ENCODE measurements at regions of chr17 and their contacts with region 1.

Region 1: GRCh38 chr17:48127356-48128051 is 19.9 kb downstream of the SNX11 start:
- DNase-seq: no peak
- ATAC-seq: no peak
- H3K4me3 ChIP-seq: no peak overlapping the region
- H3K27ac ChIP-seq: no peak overlapping the region
- H3K4me1 ChIP-seq: no peaks in the 10 kb centered on the region
- H3K27me3 ChIP-seq: no peaks in the 10 kb centered on the region
- CTCF ChIP-seq: no peak
- POLR2A ChIP-seq: no peak

Region 2: DNA sequence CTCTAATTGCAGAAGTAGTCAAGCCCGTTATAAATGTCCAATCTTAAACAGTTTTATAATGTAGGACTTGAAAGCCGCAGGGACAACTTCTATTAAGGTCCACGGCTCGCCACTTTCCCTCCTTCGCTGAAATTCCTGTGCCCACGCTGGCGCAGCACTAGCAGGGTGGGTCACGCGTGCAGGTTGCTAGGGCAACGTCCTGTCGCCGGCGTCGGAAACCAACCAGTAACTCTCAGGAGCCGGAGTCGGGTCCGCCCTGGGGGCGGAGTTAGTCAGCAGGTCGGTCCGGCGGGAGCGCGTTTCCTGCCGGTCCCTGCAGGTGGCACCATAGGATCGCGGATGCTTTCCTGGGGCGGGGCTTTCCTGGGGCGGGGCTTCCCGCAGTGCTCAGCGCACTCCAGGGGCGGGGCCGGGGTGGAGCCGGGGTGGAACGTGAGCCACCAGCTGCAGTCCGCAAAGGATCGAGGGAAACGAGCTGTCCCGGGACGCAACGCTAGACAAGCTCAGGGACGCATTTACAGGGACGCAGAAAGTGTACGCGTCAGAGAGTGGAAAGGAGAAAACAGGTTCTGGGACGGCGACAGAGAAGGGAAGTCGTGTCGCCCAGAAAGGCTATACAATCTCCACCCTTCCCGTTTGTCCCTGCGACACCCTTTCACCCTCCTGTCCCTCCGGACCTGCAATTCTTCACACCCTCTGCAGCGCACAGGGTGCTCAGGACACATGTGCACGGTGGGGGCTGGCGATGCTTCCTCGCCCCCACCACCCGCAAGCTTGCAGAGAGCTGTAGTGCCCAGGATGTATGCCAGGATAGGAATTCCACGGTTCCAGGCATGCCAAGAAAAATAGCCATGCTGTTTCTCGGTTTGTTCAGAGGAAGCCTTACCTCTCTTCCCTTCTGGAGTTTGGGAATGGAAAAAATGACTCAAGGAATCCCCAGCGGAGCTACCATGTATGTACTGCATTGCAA is 102.3 kb before region 1 on chr17:
- intact Hi-C with region 1: loop called (anchors 5 kb)
- DNase-seq: peak; percentile 98 to 99 (median 98)
- ATAC-seq: peak; percentile 89
- H3K4me3 ChIP-seq: no peak overlapping the region
- H3K27ac ChIP-seq: peak overlapping the region in 3 of 4 donors; percentile 30 to 64 (median 63)
- H3K4me1 ChIP-seq: peaks cover 37% of the 10 kb centered on the region
- H3K27me3 ChIP-seq: no peaks in the 10 kb centered on the region
- CTCF ChIP-seq: peak; percentile 81 to 96 (median 92)
- POLR2A ChIP-seq: peak in 2 of 3 donors; percentile 35 to 39

Region 3: GRCh38 chr17:48163813-48164212 is 36.3 kb after region 1 on chr17:
- intact Hi-C with region 1: no loop called
- DNase-seq: no peak
- ATAC-seq: no peak
- H3K4me3 ChIP-seq: no peak overlapping the region
- H3K27ac ChIP-seq: peak overlapping the region in 3 of 4 donors; percentile 84 to 92 (median 91)
- H3K4me1 ChIP-seq: peaks cover 61% of the 10 kb centered on the region
- H3K27me3 ChIP-seq: no peaks in the 10 kb centered on the region
- CTCF ChIP-seq: peak in 1 of 7 experiments; percentile 7
- POLR2A ChIP-seq: no peak

Region 4: GRCh38 chr17:48313096-48313755 is 185.7 kb after region 1 on chr17:
- intact Hi-C with region 1: no loop called
- DNase-seq: no peak
- ATAC-seq: no peak
- H3K4me3 ChIP-seq: no peak overlapping the region
- H3K27ac ChIP-seq: no peak overlapping the region
- H3K4me1 ChIP-seq: peaks cover 3% of the 10 kb centered on the region
- H3K27me3 ChIP-seq: peaks cover 0 to 6% of the 10 kb centered on the region in 2 donors
- CTCF ChIP-seq: no peak
- POLR2A ChIP-seq: no peak

Region 5: GRCh38 chr17:48505787-48506645 is 378.5 kb after region 1 on chr17:
- intact Hi-C with region 1: no loop called
- DNase-seq: peak in 1 of 4 donors; percentile 38
- ATAC-seq: peak; percentile 58
- H3K4me3 ChIP-seq: no peak overlapping the region
- H3K27ac ChIP-seq: no peak overlapping the region
- H3K4me1 ChIP-seq: no peaks in the 10 kb centered on the region
- H3K27me3 ChIP-seq: no peaks in the 10 kb centered on the region
- CTCF ChIP-seq: no peak
- POLR2A ChIP-seq: no peak

Measured in body of pancreas (tissue), 4 donors.